CD8-positive, alpha-beta T cell (primary cell): ENCODE measurements at regions of chr10 and their contacts with region 1.

Region 1: DNA sequence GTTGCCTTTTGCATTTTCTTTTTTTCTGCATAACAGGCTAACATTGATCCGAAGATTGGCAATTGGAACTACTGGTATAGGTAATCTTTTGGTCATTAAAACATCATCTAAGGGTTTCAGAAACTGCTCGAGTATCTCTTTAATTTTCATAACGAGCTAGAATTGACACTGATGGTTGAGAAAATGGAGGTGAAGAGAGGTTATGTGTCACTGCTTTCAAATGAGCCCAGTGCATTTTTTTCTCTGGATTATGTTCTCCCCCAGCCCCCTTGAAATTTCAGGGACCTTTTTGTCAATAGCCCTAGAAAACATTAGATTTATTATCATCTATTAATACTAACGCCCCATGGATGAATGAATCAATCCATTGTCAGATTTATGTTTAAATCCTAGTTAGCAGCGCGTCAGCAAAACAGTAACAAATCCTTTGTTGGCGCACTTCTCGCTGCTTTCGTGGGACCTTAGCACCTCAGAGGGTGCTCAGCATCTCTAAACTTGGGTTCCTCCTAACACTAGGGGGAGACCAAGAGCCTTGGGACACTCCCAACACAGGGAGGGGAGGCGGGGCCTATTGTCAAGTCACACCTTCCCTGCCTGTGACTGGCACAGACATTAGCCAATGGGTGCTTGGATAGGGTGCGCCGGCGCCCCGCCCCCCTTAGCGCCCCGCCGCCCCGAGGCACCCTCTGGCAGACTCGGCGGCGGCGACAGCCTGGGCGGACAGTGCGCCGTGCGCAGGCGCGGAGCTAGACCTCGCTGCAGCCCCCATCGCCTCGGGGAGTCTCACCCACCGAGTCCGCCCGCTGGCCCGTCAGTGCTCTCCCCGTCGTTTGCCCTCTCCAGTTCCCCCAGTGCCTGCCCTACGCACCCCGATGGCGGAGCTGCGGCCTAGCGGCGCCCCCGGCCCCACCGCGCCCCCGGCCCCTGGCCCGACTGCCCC is at the start of gene SUFU:
- DNase-seq: peak; percentile 94 to 100 (median 98)
- ATAC-seq: peak; percentile 69
- H3K4me3 ChIP-seq: peak within 1 kb of the TSS; percentile 85 to 89
- H3K4me3 Mint-ChIP-seq: no peak within 1 kb of the TSS
- H3K27ac ChIP-seq: peak within 1 kb of the TSS; percentile 30 to 89
- H3K27ac Mint-ChIP-seq: peak within 1 kb of the TSS; percentile 88
- H3K4me1 ChIP-seq: peaks cover 28% of the 10 kb centered on the region
- H3K4me1 Mint-ChIP-seq: peaks cover 44% of the 10 kb centered on the region
- H3K27me3 ChIP-seq: no peaks in the 10 kb centered on the region
- H3K27me3 Mint-ChIP-seq: no peaks in the 10 kb centered on the region
- CTCF ChIP-seq: peak; percentile 75
- total RNA-seq, gene SUFU: 3.9 to 4.2 TPM

Region 2: GRCh38 chr10:100535715-100536353 is 1967.7 kb before region 1 on chr10 and contains the start of gene HIF1AN:
- CTCF ChIA-PET with region 1: no interaction called
- POLR2A ChIA-PET with region 1: no interaction called
- intact Hi-C with region 1: loop called in 1 of 2 experiments (anchors 10 kb)
- DNase-seq: peak; percentile 73 to 97 (median 88)
- ATAC-seq: peak; percentile 99
- H3K4me3 ChIP-seq: peak within 1 kb of the TSS; percentile 59 to 82
- H3K4me3 Mint-ChIP-seq: no peak within 1 kb of the TSS
- H3K27ac ChIP-seq: peak within 1 kb of the TSS; percentile 55 to 75
- H3K27ac Mint-ChIP-seq: no peak within 1 kb of the TSS
- H3K4me1 ChIP-seq: peaks cover 29% of the 10 kb centered on the region
- H3K4me1 Mint-ChIP-seq: peaks cover 19% of the 10 kb centered on the region
- H3K27me3 ChIP-seq: no peaks in the 10 kb centered on the region
- H3K27me3 Mint-ChIP-seq: no peaks in the 10 kb centered on the region
- CTCF ChIP-seq: peak; percentile 92
- total RNA-seq, gene HIF1AN: 28.0 to 31.2 TPM

Region 3: GRCh38 chr10:102132563-102133372 is 370.8 kb before region 1 on chr10 and contains the start of gene PPRC1:
- CTCF ChIA-PET with region 1: no interaction called
- POLR2A ChIA-PET with region 1: no interaction called
- intact Hi-C with region 1: loop called (anchors 1 kb)
- DNase-seq: peak; percentile 91 to 99 (median 96)
- ATAC-seq: peak; percentile 93
- H3K4me3 ChIP-seq: peak within 1 kb of the TSS; percentile 79 to 96
- H3K4me3 Mint-ChIP-seq: peak within 1 kb of the TSS; percentile 96
- H3K27ac ChIP-seq: peak within 1 kb of the TSS; percentile 75 to 92
- H3K27ac Mint-ChIP-seq: peak within 1 kb of the TSS; percentile 95
- H3K4me1 ChIP-seq: peaks cover 26% of the 10 kb centered on the region
- H3K4me1 Mint-ChIP-seq: peaks cover 40% of the 10 kb centered on the region
- H3K27me3 ChIP-seq: no peaks in the 10 kb centered on the region
- H3K27me3 Mint-ChIP-seq: no peaks in the 10 kb centered on the region
- CTCF ChIP-seq: peak; percentile 96
- total RNA-seq, gene PPRC1: 35.2 to 38.5 TPM

Region 4: GRCh38 chr10:102394079-102394800 is 109.3 kb before region 1 on chr10:
- CTCF ChIA-PET with region 1: interaction called, 4 read pairs
- POLR2A ChIA-PET with region 1: interaction called, 7 read pairs
- intact Hi-C with region 1: loop called (anchors 1 kb)
- DNase-seq: peak; percentile 95 to 99 (median 98)
- ATAC-seq: peak; percentile 74
- H3K4me3 ChIP-seq: peak overlapping the region; percentile 89 to 95
- H3K4me3 Mint-ChIP-seq: peak overlapping the region; percentile 90
- H3K27ac ChIP-seq: peak overlapping the region; percentile 99 to 100
- H3K27ac Mint-ChIP-seq: peak overlapping the region; percentile 98
- H3K4me1 ChIP-seq: peaks cover 24% of the 10 kb centered on the region
- H3K4me1 Mint-ChIP-seq: peaks cover 37% of the 10 kb centered on the region
- H3K27me3 ChIP-seq: no peaks in the 10 kb centered on the region
- H3K27me3 Mint-ChIP-seq: no peaks in the 10 kb centered on the region
- CTCF ChIP-seq: no peak

Region 5: GRCh38 chr10:102450194-102450938 is 53.2 kb before region 1 on chr10:
- CTCF ChIA-PET with region 1: interaction called, 5 read pairs
- POLR2A ChIA-PET with region 1: interaction called, 9 read pairs
- intact Hi-C with region 1: loop called in 1 of 2 experiments (anchors 1 kb)
- DNase-seq: peak; percentile 78 to 98 (median 89)
- ATAC-seq: peak; percentile 77
- H3K4me3 ChIP-seq: peak overlapping the region; percentile 73 to 92
- H3K4me3 Mint-ChIP-seq: peak overlapping the region; percentile 92
- H3K27ac ChIP-seq: peak overlapping the region; percentile 76 to 88
- H3K27ac Mint-ChIP-seq: peak overlapping the region; percentile 94
- H3K4me1 ChIP-seq: peaks cover 16% of the 10 kb centered on the region
- H3K4me1 Mint-ChIP-seq: peaks cover 23% of the 10 kb centered on the region
- H3K27me3 ChIP-seq: no peaks in the 10 kb centered on the region
- H3K27me3 Mint-ChIP-seq: no peaks in the 10 kb centered on the region
- CTCF ChIP-seq: no peak

Region 6: DNA sequence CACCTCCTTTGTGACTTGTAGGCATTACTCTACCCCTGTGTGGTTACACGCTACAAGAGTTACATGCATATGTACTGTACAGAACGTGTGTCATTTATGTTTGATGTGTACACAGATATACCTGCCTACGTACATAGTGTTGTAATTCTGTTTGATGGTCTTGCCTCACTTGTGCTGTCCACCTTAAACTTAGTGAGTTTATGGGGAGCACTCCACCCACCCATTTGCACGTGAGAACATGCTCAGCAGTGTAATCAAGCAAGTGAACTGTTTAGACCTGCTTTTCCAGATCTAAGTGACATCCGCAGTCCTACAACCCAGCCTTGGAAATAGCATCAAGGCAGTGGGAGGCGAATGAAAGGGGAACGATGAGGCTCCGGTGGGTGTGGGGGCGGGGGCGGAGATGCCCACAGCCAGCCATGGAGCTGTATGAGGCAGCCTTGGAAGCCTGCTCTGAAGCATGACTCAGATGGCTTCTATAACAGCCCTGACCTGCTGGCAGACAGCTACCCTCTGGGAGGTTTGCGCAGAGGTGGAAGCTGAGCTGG is 52.3 kb after region 1 on chr10:
- CTCF ChIA-PET with region 1: no interaction called
- POLR2A ChIA-PET with region 1: no interaction called
- intact Hi-C with region 1: no loop called
- DNase-seq: no peak
- ATAC-seq: no peak
- H3K4me3 ChIP-seq: no peak overlapping the region
- H3K4me3 Mint-ChIP-seq: no peak overlapping the region
- H3K27ac ChIP-seq: no peak overlapping the region
- H3K27ac Mint-ChIP-seq: no peak overlapping the region
- H3K4me1 ChIP-seq: no peaks in the 10 kb centered on the region
- H3K4me1 Mint-ChIP-seq: no peaks in the 10 kb centered on the region
- H3K27me3 ChIP-seq: no peaks in the 10 kb centered on the region
- H3K27me3 Mint-ChIP-seq: no peaks in the 10 kb centered on the region
- CTCF ChIP-seq: no peak

Region 7: GRCh38 chr10:102641880-102642735 is 138.6 kb after region 1 on chr10:
- CTCF ChIA-PET with region 1: interaction called, 8 read pairs
- POLR2A ChIA-PET with region 1: interaction called, 18 read pairs
- intact Hi-C with region 1: loop called (anchors 1 kb)
- DNase-seq: peak; percentile 94 to 99 (median 98)
- ATAC-seq: peak; percentile 69
- H3K4me3 ChIP-seq: peak overlapping the region; percentile 67 to 81
- H3K4me3 Mint-ChIP-seq: peak overlapping the region; percentile 91
- H3K27ac ChIP-seq: peak overlapping the region; percentile 71 to 94
- H3K27ac Mint-ChIP-seq: peak overlapping the region; percentile 96
- H3K4me1 ChIP-seq: peaks cover 12% of the 10 kb centered on the region
- H3K4me1 Mint-ChIP-seq: peaks cover 26% of the 10 kb centered on the region
- H3K27me3 ChIP-seq: no peaks in the 10 kb centered on the region
- H3K27me3 Mint-ChIP-seq: no peaks in the 10 kb centered on the region
- CTCF ChIP-seq: no peak

Region 8: DNA sequence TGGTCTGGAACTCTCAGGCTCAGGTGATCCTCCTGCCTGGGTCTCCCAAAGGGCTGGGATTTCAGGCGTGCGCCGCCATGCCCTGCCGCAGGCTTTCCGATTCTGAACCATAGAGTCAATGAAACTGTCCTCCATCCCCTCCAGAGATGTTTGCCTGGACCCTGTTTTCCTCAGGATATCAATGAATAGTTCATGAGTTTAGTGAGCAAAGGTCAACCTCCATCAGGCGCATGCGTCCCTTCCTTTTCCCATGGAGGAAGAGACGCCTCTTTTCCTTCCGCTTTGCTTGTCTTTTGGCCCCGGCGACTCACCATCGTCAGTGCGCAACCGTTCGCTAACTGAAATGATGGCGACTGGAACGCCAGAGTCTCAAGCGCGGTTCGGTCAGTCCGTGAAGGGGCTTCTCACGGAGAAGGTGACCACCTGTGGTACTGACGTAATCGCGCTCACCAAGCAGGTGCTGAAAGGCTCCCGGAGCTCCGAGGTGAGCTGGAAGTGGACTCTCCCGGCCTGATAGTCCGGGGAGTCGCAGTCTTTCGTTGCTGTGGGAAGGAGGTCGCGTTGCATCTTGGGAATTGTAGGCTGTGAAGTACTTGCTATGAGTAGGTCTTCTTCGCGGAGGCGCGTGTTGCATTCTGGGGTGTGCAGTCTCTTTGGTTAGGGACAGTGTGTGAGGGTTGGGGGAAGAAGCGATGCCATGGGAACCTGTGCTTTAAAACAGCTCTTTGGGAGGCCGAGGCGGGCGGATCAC is 350.6 kb after region 1 on chr10 and contains the start of gene BORCS7:
- CTCF ChIA-PET with region 1: no interaction called
- POLR2A ChIA-PET with region 1: no interaction called
- intact Hi-C with region 1: loop called in 1 of 2 experiments (anchors 10 kb)
- DNase-seq: peak; percentile 68 to 95 (median 87)
- ATAC-seq: peak; percentile 99
- H3K4me3 ChIP-seq: peak within 1 kb of the TSS; percentile 99
- H3K4me3 Mint-ChIP-seq: peak within 1 kb of the TSS; percentile 99
- H3K27ac ChIP-seq: peak within 1 kb of the TSS; percentile 90 to 98
- H3K27ac Mint-ChIP-seq: peak within 1 kb of the TSS; percentile 99
- H3K4me1 ChIP-seq: peaks cover 5% of the 10 kb centered on the region
- H3K4me1 Mint-ChIP-seq: peaks cover 17% of the 10 kb centered on the region
- H3K27me3 ChIP-seq: no peaks in the 10 kb centered on the region
- H3K27me3 Mint-ChIP-seq: no peaks in the 10 kb centered on the region
- CTCF ChIP-seq: no peak
- total RNA-seq, gene BORCS7: 13.7 to 13.9 TPM

Region 9: GRCh38 chr10:103295374-103296015 is 791.9 kb after region 1 on chr10:
- CTCF ChIA-PET with region 1: no interaction called
- POLR2A ChIA-PET with region 1: no interaction called
- intact Hi-C with region 1: no loop called
- DNase-seq: no peak
- ATAC-seq: no peak
- H3K4me3 ChIP-seq: no peak overlapping the region
- H3K4me3 Mint-ChIP-seq: no peak overlapping the region
- H3K27ac ChIP-seq: no peak overlapping the region
- H3K27ac Mint-ChIP-seq: no peak overlapping the region
- H3K4me1 ChIP-seq: no peaks in the 10 kb centered on the region
- H3K4me1 Mint-ChIP-seq: no peaks in the 10 kb centered on the region
- H3K27me3 ChIP-seq: no peaks in the 10 kb centered on the region
- H3K27me3 Mint-ChIP-seq: peaks cover 5% of the 10 kb centered on the region
- CTCF ChIP-seq: no peak

Region 10: GRCh38 chr10:103942866-103943265 is 1439.3 kb after region 1 on chr10:
- CTCF ChIA-PET with region 1: no interaction called
- POLR2A ChIA-PET with region 1: no interaction called
- intact Hi-C with region 1: no loop called
- DNase-seq: no peak
- ATAC-seq: no peak
- H3K4me3 ChIP-seq: no peak overlapping the region
- H3K4me3 Mint-ChIP-seq: no peak overlapping the region
- H3K27ac ChIP-seq: no peak overlapping the region
- H3K27ac Mint-ChIP-seq: no peak overlapping the region
- H3K4me1 ChIP-seq: no peaks in the 10 kb centered on the region
- H3K4me1 Mint-ChIP-seq: peaks cover 3% of the 10 kb centered on the region
- H3K27me3 ChIP-seq: peaks cover 0 to 2% of the 10 kb centered on the region in 2 experiments
- H3K27me3 Mint-ChIP-seq: no peaks in the 10 kb centered on the region
- CTCF ChIP-seq: no peak